ENCODE measurements at regions of chr6 and their contacts with region 1.

Region 1: GRCh38 chr6:158853072-158853871 is 34.1 kb upstream of the EZR start:
- DNase-seq: peak; percentile 61 to 95 (median 83)
- ATAC-seq: peak; percentile 61 to 70
- H3K4me3 Mint-ChIP-seq: no peak overlapping the region
- H3K27ac Mint-ChIP-seq: no peak overlapping the region
- H3K4me1 Mint-ChIP-seq: peaks cover 13 to 44% (median 32%) of the 10 kb centered on the region in 4 donors
- H3K27me3 Mint-ChIP-seq: no peaks in the 10 kb centered on the region

Region 2: GRCh38 chr6:158194487-158195280 is 658.6 kb before region 1 on chr6:
- POLR2A ChIA-PET with region 1: no interaction called
- DNase-seq: no peak
- ATAC-seq: no peak
- H3K4me3 Mint-ChIP-seq: no peak overlapping the region
- H3K27ac Mint-ChIP-seq: no peak overlapping the region
- H3K4me1 Mint-ChIP-seq: peaks cover 0 to 1% (median 0%) of the 10 kb centered on the region in 4 donors
- H3K27me3 Mint-ChIP-seq: no peaks in the 10 kb centered on the region

Region 3: DNA sequence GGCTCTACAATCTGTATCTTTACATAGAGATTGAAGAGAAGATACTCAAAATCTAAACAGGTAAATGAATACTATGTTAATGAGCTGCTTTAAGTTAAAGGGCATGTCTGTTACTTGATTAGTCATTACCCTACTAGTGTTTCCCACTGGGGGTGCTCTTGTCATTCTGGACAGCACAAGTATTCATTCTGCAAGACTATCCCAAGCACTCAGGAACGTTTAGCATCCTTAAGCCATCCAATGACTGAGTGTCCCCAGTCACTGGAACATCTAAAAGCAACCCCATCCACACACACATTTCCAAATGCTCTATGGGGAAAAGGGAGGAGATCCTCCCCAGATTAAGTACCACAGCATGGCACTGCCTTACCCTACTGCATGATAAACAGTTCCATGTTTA is 59.8 kb before region 1 on chr6:
- POLR2A ChIA-PET with region 1: interaction called, 16 read pairs
- DNase-seq: peak in 1 of 10 donors; percentile 45
- ATAC-seq: peak; percentile 16 to 17
- H3K4me3 Mint-ChIP-seq: peak overlapping the region in 3 of 10 donors; percentile 20 to 37 (median 28)
- H3K27ac Mint-ChIP-seq: peak overlapping the region in 5 of 10 donors; percentile 53 to 90 (median 72)
- H3K4me1 Mint-ChIP-seq: peaks cover 38 to 90% (median 78%) of the 10 kb centered on the region in 4 donors
- H3K27me3 Mint-ChIP-seq: no peaks in the 10 kb centered on the region

Region 4: DNA sequence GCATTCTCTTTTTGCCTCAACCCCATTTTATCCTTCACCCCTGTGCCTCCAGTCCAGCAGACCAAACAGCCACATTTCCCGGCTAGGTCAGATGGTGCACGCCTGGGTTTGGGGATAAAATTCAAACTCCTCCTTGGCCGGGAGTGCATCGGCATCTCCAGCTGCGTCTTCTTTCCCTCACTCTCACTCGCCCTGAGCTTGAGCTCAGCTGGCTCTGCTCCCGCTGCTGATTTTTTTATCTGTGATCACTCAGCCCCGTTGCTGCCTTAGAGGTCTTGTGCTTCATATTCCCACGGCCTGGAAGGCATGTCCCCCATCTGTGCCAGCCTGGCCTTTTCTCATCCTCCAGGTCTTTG is 27.3 kb before region 1 on chr6:
- POLR2A ChIA-PET with region 1: interaction called, 51 read pairs
- DNase-seq: no peak
- ATAC-seq: no peak
- H3K4me3 Mint-ChIP-seq: peak overlapping the region in 1 of 10 donors; percentile 41
- H3K27ac Mint-ChIP-seq: peak overlapping the region in 5 of 10 donors; percentile 15 to 88 (median 28)
- H3K4me1 Mint-ChIP-seq: peaks cover 0 to 31% (median 4%) of the 10 kb centered on the region in 4 donors
- H3K27me3 Mint-ChIP-seq: no peaks in the 10 kb centered on the region

Region 5: GRCh38 chr6:158863646-158864045 is 10.4 kb after region 1 on chr6:
- POLR2A ChIA-PET with region 1: interaction called, 189 read pairs
- DNase-seq: no peak
- ATAC-seq: no peak
- H3K4me3 Mint-ChIP-seq: no peak overlapping the region
- H3K27ac Mint-ChIP-seq: peak overlapping the region in 3 of 10 donors; percentile 36 to 52 (median 40)
- H3K4me1 Mint-ChIP-seq: peaks cover 2 to 37% (median 8%) of the 10 kb centered on the region in 4 donors
- H3K27me3 Mint-ChIP-seq: no peaks in the 10 kb centered on the region

Region 6: DNA sequence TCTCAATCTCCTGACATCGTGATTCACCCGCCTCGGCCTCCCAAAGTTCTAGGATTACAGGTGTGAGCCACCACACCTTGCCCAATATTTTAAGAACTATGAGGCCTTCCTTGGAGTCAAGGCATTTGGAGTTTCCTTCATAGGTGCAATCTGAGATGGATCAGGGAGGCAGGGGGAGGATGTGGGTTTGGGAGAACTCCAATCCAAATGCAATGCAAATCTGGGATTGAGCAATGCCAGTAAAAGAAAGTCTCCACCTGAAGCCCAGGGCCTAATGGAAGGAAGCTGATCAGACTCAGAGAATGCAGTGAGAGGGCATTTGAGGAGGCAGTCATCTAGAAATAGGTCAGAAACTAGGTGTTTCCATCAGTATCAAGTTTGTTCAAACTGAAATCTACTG is 125.5 kb after region 1 on chr6:
- POLR2A ChIA-PET with region 1: no interaction called
- DNase-seq: no peak
- ATAC-seq: no peak
- H3K4me3 Mint-ChIP-seq: no peak overlapping the region
- H3K27ac Mint-ChIP-seq: no peak overlapping the region
- H3K4me1 Mint-ChIP-seq: no peaks in the 10 kb centered on the region
- H3K27me3 Mint-ChIP-seq: no peaks in the 10 kb centered on the region

Measured in naive thymus-derived CD8-positive, alpha-beta T cell (primary cell).